ENCODE measurements at regions of chr2 and their contacts with region 1.

Region 1: GRCh38 chr2:20642055-20642971 is 8.6 kb downstream of the HS1BP3 start:
- DNase-seq: peak; percentile 45 to 79 (median 74)
- ATAC-seq: peak; percentile 96
- H3K4me3 ChIP-seq: no peak overlapping the region
- H3K4me3 Mint-ChIP-seq: no peak overlapping the region
- H3K27ac ChIP-seq: no peak overlapping the region
- H3K27ac Mint-ChIP-seq: peak overlapping the region in 1 of 9 donors; percentile 65
- H3K4me1 ChIP-seq: no peaks in the 10 kb centered on the region
- H3K4me1 Mint-ChIP-seq: peaks cover 0 to 12% (median 7%) of the 10 kb centered on the region in 7 donors
- H3K27me3 ChIP-seq: no peaks in the 10 kb centered on the region
- H3K27me3 Mint-ChIP-seq: no peaks in the 10 kb centered on the region

Region 2: GRCh38 chr2:20135631-20136050 is 506.7 kb before region 1 on chr2:
- CTCF ChIA-PET with region 1: no interaction called
- POLR2A ChIA-PET with region 1: no interaction called
- intact Hi-C with region 1: loop called in 1 of 2 experiments (anchors 5 kb)
- DNase-seq: peak in 4 of 9 donors; percentile 4 to 7 (median 5)
- ATAC-seq: peak; percentile 30
- H3K4me3 ChIP-seq: no peak overlapping the region
- H3K4me3 Mint-ChIP-seq: no peak overlapping the region
- H3K27ac ChIP-seq: no peak overlapping the region
- H3K27ac Mint-ChIP-seq: no peak overlapping the region
- H3K4me1 ChIP-seq: no peaks in the 10 kb centered on the region
- H3K4me1 Mint-ChIP-seq: peaks cover 0 to 1% (median 0%) of the 10 kb centered on the region in 7 donors
- H3K27me3 ChIP-seq: no peaks in the 10 kb centered on the region
- H3K27me3 Mint-ChIP-seq: peaks cover 2 to 19% (median 16%) of the 10 kb centered on the region in 5 donors

Region 3: GRCh38 chr2:20411361-20411894 is 230.9 kb before region 1 on chr2:
- CTCF ChIA-PET with region 1: interaction called, 15 read pairs
- POLR2A ChIA-PET with region 1: no interaction called
- intact Hi-C with region 1: loop called (anchors 1 kb)
- DNase-seq: peak; percentile 27 to 67 (median 55)
- ATAC-seq: peak; percentile 100
- H3K4me3 ChIP-seq: no peak overlapping the region
- H3K4me3 Mint-ChIP-seq: no peak overlapping the region
- H3K27ac ChIP-seq: no peak overlapping the region
- H3K27ac Mint-ChIP-seq: no peak overlapping the region
- H3K4me1 ChIP-seq: no peaks in the 10 kb centered on the region
- H3K4me1 Mint-ChIP-seq: peaks cover 0 to 6% (median 0%) of the 10 kb centered on the region in 7 donors
- H3K27me3 ChIP-seq: no peaks in the 10 kb centered on the region
- H3K27me3 Mint-ChIP-seq: peaks cover 0 to 43% (median 8%) of the 10 kb centered on the region in 5 donors

Region 4: GRCh38 chr2:20438334-20439192 is 203.8 kb before region 1 on chr2:
- CTCF ChIA-PET with region 1: interaction called, 28 read pairs
- POLR2A ChIA-PET with region 1: no interaction called
- intact Hi-C with region 1: loop called (anchors 1 kb)
- DNase-seq: no peak
- ATAC-seq: peak; percentile 72
- H3K4me3 ChIP-seq: no peak overlapping the region
- H3K4me3 Mint-ChIP-seq: no peak overlapping the region
- H3K27ac ChIP-seq: no peak overlapping the region
- H3K27ac Mint-ChIP-seq: no peak overlapping the region
- H3K4me1 ChIP-seq: no peaks in the 10 kb centered on the region
- H3K4me1 Mint-ChIP-seq: peaks cover 0 to 4% (median 0%) of the 10 kb centered on the region in 7 donors
- H3K27me3 ChIP-seq: no peaks in the 10 kb centered on the region
- H3K27me3 Mint-ChIP-seq: peaks cover 0 to 51% (median 11%) of the 10 kb centered on the region in 5 donors

Region 5: DNA sequence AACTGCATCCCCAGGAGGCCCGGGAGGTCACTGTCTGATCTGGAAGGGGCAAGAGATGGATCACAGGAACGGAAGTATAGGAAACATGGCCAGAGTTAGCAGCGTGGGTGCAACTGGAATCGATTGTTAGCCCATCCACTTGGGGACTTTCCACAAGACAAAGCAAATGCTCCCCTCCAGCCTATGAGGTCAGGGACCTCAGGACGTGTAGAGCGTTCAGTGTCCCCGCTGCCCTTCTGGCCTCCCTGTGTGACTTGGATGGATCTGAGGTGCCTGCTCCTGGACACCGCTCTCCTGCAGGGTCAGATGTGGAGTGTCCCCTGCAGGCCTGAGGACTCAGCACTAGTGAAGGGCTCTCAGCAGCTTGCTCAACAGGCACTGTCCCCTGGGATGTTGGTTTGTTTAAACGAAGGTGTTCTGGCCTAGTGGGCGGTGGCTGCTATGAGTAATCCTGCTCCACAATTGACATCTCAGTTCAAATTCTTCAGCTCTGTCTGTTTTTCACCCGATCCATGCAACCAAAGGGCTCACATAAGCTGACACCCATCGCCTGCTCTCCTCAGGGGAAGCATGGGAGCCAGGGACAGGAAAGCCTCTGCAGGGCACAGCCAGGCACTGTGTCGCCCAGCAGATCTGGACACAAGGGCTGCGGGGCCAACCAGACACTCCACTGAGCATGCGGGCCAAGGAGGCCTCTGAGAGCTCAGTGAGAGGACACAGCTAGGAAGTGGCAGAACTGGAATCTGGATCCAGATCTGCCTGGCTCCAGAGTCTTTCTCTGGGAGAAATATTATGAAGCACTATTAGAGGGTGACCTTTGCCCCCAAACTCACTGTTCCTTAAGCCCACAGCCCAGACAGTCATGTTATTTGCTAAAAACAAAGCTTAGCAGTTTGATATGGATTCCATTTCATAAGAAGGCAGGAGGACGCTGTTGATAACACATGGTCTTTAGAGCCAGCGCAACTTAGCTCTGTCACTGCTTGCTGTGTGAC is 117.0 kb before region 1 on chr2:
- CTCF ChIA-PET with region 1: no interaction called
- POLR2A ChIA-PET with region 1: no interaction called
- intact Hi-C with region 1: no loop called
- DNase-seq: no peak
- ATAC-seq: no peak
- H3K4me3 ChIP-seq: no peak overlapping the region
- H3K4me3 Mint-ChIP-seq: peak overlapping the region in 1 of 10 donors; percentile 40
- H3K27ac ChIP-seq: no peak overlapping the region
- H3K27ac Mint-ChIP-seq: no peak overlapping the region
- H3K4me1 ChIP-seq: no peaks in the 10 kb centered on the region
- H3K4me1 Mint-ChIP-seq: peaks cover 0 to 7% (median 0%) of the 10 kb centered on the region in 7 donors
- H3K27me3 ChIP-seq: no peaks in the 10 kb centered on the region
- H3K27me3 Mint-ChIP-seq: peaks cover 0 to 5% (median 4%) of the 10 kb centered on the region in 5 donors